ENCODE measurements at regions of chr17 and their contacts with region 1.

Region 1: DNA sequence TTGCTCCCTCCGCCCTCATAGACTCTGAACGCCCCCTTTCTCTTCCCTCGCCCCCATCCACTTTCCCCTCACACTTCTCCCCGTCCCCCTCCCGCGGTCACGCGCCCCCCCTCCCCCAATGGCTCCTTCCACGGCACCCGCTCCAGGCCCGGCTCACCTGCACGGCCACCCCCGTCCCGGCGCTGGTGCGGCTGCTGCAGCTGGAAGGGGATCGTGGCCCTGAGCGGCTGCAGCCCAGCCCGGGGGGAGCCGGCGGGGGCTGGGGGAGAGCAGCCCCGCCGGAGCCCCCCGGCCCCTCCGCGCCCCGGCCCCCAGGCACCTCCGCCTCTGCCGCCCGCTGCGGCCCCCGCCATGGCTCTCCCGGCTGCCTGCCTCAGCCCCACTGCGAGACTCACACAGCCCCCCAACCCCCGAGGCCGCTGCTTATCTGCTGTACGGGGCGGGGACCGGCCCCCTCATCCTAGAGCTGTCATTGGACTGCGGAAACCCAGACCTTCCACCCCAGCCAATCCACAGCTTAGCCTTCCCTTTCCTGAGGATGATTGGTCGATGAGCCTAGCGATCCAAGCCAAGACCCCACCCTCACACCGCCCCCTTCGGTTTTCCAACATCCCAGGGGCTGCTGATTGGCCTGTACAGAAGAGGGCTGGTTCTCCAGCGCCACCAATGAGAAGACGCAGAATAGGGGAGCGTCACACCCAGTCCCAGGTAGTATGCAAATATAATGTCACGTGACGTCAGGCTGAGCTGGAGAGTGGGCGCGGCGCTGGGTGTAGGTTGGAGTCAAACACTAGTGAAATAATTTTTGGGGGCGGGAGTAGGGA is at the start of gene FAM117A:
- DNase-seq: peak; percentile 91
- H3K4me3 ChIP-seq: peak within 1 kb of the TSS; percentile 76
- H3K27me3 ChIP-seq: peaks cover 15% of the 10 kb centered on the region
- CTCF ChIP-seq: no peak
- polyA plus RNA-seq, gene FAM117A: 2.2 and 3.9 TPM in 2 replicates

Region 2: GRCh38 chr17:49731435-49731831 is 32.5 kb before region 1 on chr17:
- CTCF ChIA-PET with region 1: no interaction called
- POLR2A ChIA-PET with region 1: interaction called, 13 read pairs
- DNase-seq: no peak
- H3K4me3 ChIP-seq: no peak overlapping the region
- H3K27me3 ChIP-seq: no peaks in the 10 kb centered on the region
- CTCF ChIP-seq: no peak

Measured in BJ (cell line).